Activated B cell treated with CpG ODN at 0.5 μM for 24 hours (primary cell): ENCODE measurements at regions of chr12 and their contacts with region 1.

Region 1: GRCh38 chr12:103495479-103496456 is at the start of gene C12orf42:
- DNase-seq: peak; percentile 80
- ATAC-seq: peak; percentile 86
- H3K4me3 Mint-ChIP-seq: peak within 1 kb of the TSS; percentile 84
- H3K27ac Mint-ChIP-seq: peak within 1 kb of the TSS; percentile 77
- H3K4me1 Mint-ChIP-seq: peaks cover 45% of the 10 kb centered on the region
- H3K27me3 Mint-ChIP-seq: no peaks in the 10 kb centered on the region
- CTCF ChIP-seq: no peak
- total RNA-seq, gene C12orf42: 15.0 and 21.0 TPM in 2 replicates

Region 2: DNA sequence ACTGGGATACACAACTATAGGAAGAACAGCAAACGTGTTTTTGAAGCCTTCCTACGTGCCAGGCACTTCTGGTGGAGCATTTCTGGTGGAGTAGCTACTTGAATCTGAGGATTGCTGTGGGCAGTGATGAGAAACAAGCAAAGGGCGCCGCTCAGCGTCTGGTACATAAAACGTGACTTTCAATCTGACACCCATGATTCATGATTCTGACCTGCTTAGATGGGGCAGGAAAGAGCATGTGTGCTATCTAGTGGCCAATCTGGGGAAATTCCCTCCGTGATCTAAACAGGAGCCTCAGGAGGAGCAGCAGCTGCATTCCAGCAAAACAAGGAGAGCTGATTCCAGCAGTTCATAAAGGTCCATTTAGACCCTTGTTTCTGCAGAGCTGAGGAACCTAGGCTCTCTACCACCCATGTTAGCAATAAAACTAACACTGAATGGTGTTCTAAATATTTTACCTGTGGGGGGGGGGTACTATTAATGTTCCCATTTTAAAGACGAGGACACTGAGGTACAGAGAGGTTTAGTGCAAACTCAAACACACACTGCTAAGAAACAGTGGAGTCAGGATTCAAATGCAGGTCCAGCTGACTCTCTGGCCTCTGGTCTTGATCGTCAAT is 616.5 kb before region 1 on chr12:
- CTCF ChIA-PET with region 1: interaction called, 10 read pairs
- POLR2A ChIA-PET with region 1: no interaction called
- intact Hi-C with region 1: no loop called
- DNase-seq: no peak
- ATAC-seq: peak; percentile 60
- H3K4me3 Mint-ChIP-seq: no peak overlapping the region
- H3K27ac Mint-ChIP-seq: no peak overlapping the region
- H3K4me1 Mint-ChIP-seq: peaks cover 3% of the 10 kb centered on the region
- H3K27me3 Mint-ChIP-seq: peaks cover 18% of the 10 kb centered on the region
- CTCF ChIP-seq: no peak

Region 3: DNA sequence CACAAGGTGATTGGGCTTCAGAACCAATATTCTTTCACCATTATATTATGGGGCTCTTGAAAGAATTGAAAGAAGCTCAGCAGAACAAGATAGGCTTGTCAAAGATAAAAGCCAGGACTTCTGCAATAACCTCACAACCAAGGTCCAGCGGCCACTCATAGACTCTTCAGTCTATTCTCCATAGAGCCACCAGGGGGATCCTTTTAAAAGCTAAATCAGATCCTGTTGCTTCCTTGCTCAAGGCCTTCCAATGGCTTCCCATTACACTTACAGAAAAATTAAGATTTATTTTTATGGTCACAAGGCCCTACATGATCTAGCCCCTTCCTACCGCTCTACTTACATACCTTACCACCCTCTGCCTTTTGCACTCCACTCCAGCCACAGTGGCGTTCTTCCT is 169.6 kb before region 1 on chr12:
- CTCF ChIA-PET with region 1: no interaction called
- POLR2A ChIA-PET with region 1: no interaction called
- intact Hi-C with region 1: loop called (anchors 2 kb)
- DNase-seq: no peak
- ATAC-seq: peak; percentile 42
- H3K4me3 Mint-ChIP-seq: no peak overlapping the region
- H3K27ac Mint-ChIP-seq: no peak overlapping the region
- H3K4me1 Mint-ChIP-seq: no peaks in the 10 kb centered on the region
- H3K27me3 Mint-ChIP-seq: no peaks in the 10 kb centered on the region
- CTCF ChIP-seq: no peak

Region 4: GRCh38 chr12:103386451-103386850 is 109.3 kb before region 1 on chr12:
- CTCF ChIA-PET with region 1: no interaction called
- POLR2A ChIA-PET with region 1: no interaction called
- intact Hi-C with region 1: no loop called
- DNase-seq: no peak
- ATAC-seq: no peak
- H3K4me3 Mint-ChIP-seq: no peak overlapping the region
- H3K27ac Mint-ChIP-seq: no peak overlapping the region
- H3K4me1 Mint-ChIP-seq: peaks cover 4% of the 10 kb centered on the region
- H3K27me3 Mint-ChIP-seq: no peaks in the 10 kb centered on the region
- CTCF ChIP-seq: no peak

Region 5: DNA sequence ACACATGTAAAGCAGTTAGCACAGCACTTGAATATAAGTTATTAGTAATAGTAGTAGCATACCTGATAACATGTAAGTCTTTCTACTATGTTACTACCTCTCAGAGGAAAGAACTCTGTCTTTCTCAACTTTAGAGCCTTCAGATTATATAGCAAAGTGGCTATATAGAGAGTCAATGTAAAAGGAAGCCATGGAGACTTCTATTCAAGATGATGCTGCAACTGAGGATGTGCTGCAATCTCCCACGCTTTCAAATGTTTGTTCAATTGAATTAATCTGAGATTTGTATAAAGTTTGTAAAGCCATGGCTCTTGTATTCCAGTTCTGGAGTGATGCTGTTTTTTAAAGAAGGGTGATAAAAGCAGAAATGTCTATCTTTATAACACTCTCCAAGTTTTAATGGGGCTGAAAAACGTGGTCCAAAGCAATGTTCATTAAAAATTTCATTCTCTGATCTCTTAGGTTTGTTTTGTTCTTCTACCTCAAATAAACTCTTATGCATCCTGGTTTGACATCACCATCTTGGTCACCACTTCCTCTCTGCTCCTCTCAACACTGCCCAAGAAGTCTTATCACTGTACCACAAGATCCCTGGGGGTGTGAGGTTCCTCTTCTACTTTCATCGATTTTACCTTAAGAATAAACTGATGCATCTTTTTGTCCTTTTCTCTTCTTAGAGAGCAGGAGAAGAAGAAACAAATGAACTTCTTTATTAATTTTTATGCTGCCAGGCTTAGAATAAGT is 40.6 kb before region 1 on chr12:
- CTCF ChIA-PET with region 1: no interaction called
- POLR2A ChIA-PET with region 1: no interaction called
- intact Hi-C with region 1: loop called (anchors 1 kb)
- DNase-seq: no peak
- ATAC-seq: peak; percentile 98
- H3K4me3 Mint-ChIP-seq: peak overlapping the region; percentile 26
- H3K27ac Mint-ChIP-seq: peak overlapping the region; percentile 70
- H3K4me1 Mint-ChIP-seq: peaks cover 46% of the 10 kb centered on the region
- H3K27me3 Mint-ChIP-seq: no peaks in the 10 kb centered on the region
- CTCF ChIP-seq: no peak

Region 6: DNA sequence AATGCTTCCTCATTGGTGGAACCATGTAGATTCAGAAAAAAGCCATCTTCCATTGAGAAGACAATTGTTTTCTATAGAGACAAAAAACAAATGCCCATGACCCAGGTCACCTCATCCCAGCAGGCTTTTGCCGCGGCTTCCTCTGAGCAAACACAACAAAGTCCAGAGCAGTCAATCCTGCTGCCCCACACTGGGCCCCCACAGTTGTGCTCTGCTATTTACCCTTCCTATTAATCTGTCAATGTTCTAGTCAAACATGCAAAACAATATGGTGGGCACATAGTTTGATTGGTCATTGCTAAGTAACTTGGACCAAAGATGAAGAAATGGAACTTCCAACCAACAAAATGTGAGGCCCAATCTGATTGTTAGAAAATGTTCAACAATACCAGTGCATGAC is 20.7 kb before region 1 on chr12:
- CTCF ChIA-PET with region 1: no interaction called
- POLR2A ChIA-PET with region 1: no interaction called
- intact Hi-C with region 1: no loop called
- DNase-seq: no peak
- ATAC-seq: no peak
- H3K4me3 Mint-ChIP-seq: no peak overlapping the region
- H3K27ac Mint-ChIP-seq: no peak overlapping the region
- H3K4me1 Mint-ChIP-seq: peaks cover 14% of the 10 kb centered on the region
- H3K27me3 Mint-ChIP-seq: no peaks in the 10 kb centered on the region
- CTCF ChIP-seq: no peak

Region 7: DNA sequence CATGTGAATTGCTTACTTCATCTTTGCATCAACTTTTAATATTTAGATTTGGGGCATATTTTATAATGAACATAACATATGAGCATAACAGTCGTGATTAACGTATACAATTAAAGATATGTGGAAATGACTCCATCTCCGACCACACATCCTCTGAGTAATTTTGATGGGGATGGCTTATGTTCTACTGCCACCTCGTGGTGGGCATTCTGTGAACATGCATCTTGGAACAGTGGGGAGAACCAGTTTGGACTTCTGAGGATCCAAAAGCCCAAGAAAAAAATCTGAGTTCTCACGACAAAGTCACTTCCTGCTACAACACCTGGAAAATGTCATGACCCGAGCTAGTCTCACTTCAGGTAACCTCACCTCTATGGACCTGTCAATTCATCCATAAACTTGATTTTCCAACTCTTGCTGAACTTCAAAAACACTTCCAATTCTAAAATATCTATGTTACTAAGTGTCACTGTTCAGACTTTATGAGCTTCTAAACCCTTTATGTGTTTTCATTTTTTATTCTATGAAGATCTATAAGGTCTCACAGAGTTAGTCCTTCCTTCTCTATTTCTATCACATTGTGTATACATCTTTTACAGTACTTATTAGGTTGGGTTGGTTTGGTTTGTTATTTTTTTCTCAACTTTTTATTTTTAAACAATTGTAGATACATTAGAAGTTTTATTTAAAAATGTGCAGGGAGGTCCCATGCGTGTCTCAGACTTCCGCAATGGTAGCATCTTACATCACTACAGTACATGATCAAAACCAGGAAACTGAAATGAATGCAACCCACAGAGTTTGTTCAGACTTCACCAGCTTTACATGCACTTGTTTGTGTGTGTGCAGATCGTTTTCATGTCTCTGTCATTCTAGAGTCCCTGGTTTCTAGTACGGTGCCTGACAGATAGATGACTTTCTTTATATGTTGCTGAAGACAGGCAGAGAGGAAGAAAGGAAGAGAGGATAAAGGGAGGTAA is 53.1 kb after region 1 on chr12:
- CTCF ChIA-PET with region 1: interaction called, 72 read pairs
- POLR2A ChIA-PET with region 1: interaction called, 20 read pairs
- intact Hi-C with region 1: loop called (anchors 1 kb)
- DNase-seq: peak; percentile 44
- ATAC-seq: peak; percentile 74
- H3K4me3 Mint-ChIP-seq: no peak overlapping the region
- H3K27ac Mint-ChIP-seq: peak overlapping the region; percentile 62
- H3K4me1 Mint-ChIP-seq: peaks cover 13% of the 10 kb centered on the region
- H3K27me3 Mint-ChIP-seq: peaks cover 9% of the 10 kb centered on the region
- CTCF ChIP-seq: peak; percentile 90